WTC11 (cell line): ENCODE measurements at regions of chr22 and their contacts with region 1.

Region 1: DNA sequence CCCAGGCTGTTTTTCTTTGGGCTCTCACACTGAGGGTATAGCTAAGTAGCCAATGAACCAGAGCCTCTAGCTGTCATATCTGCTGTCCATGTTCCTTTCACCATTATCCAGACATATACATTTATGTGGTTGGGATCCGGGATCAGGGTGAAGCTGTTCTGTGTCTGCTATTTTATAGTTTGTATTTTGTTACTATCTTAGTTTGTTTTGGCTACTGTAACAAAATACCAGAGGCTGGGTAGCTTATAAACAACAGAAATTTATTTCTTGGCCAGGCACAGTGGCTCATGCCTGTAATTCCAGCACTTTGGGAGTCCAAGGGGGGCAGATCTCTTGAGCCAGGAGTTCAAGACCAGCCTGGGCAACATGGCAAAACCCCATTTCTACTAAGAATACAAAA is 40.5 kb upstream of the CABP7 start:
- DNase-seq: no peak
- ATAC-seq: no peak
- H3K4me3 Mint-ChIP-seq: no peak overlapping the region
- H3K27ac Mint-ChIP-seq: no peak overlapping the region
- H3K4me1 Mint-ChIP-seq: no peaks in the 10 kb centered on the region
- H3K27me3 Mint-ChIP-seq: no peaks in the 10 kb centered on the region
- CTCF ChIP-seq: no peak

Region 2: GRCh38 chr22:28989035-28989464 is 690.3 kb before region 1 on chr22:
- CTCF ChIA-PET with region 1: no interaction called
- POLR2A ChIA-PET with region 1: interaction called, 11 read pairs
- DNase-seq: peak; percentile 41
- ATAC-seq: peak; percentile 91
- H3K4me3 Mint-ChIP-seq: peak overlapping the region; percentile 55
- H3K27ac Mint-ChIP-seq: peak overlapping the region; percentile 98
- H3K4me1 Mint-ChIP-seq: peaks cover 74% of the 10 kb centered on the region
- H3K27me3 Mint-ChIP-seq: no peaks in the 10 kb centered on the region
- CTCF ChIP-seq: no peak

Region 3: GRCh38 chr22:29603358-29604075 is 75.8 kb before region 1 on chr22 and contains the start of gene NF2:
- CTCF ChIA-PET with region 1: no interaction called
- POLR2A ChIA-PET with region 1: no interaction called
- DNase-seq: peak; percentile 99
- ATAC-seq: peak; percentile 94
- H3K4me3 Mint-ChIP-seq: peak within 1 kb of the TSS; percentile 90
- H3K27ac Mint-ChIP-seq: peak within 1 kb of the TSS; percentile 92
- H3K4me1 Mint-ChIP-seq: peaks cover 25% of the 10 kb centered on the region
- H3K27me3 Mint-ChIP-seq: peaks cover 5% of the 10 kb centered on the region
- CTCF ChIP-seq: no peak
- total RNA-seq, gene NF2: 56.2 to 56.9 TPM (median 56.8 TPM) in 3 replicates